Psoas muscle (tissue), 8 donors: ENCODE measurements at regions of chr10 and their contacts with region 1.

Region 1: GRCh38 chr10:15097011-15097812 is at the start of gene RPP38:
- DNase-seq: peak; percentile 97 to 99
- ATAC-seq: peak; percentile 98 to 99 (median 99)
- H3K4me3 ChIP-seq: peak within 1 kb of the TSS; percentile 86
- H3K27ac ChIP-seq: peak within 1 kb of the TSS; percentile 93
- H3K4me1 ChIP-seq: peaks cover 8% of the 10 kb centered on the region
- H3K27me3 ChIP-seq: no peaks in the 10 kb centered on the region
- CTCF ChIP-seq: no peak
- total RNA-seq, gene RPP38: 7.3 to 17.2 (median 11.1) TPM

Region 2: GRCh38 chr10:14959276-14960057 is 137.7 kb before region 1 on chr10 and contains the start of gene MEIG1:
- intact Hi-C with region 1: loop called (anchors 5 kb)
- DNase-seq: peak; percentile 92 to 96
- ATAC-seq: peak; percentile 96 to 97 (median 96)
- H3K4me3 ChIP-seq: peak within 1 kb of the TSS; percentile 96
- H3K27ac ChIP-seq: peak within 1 kb of the TSS; percentile 97
- H3K4me1 ChIP-seq: no peaks in the 10 kb centered on the region
- H3K27me3 ChIP-seq: no peaks in the 10 kb centered on the region
- CTCF ChIP-seq: no peak
- total RNA-seq, gene MEIG1: not detected

Region 3: GRCh38 chr10:15035385-15036301 is 61.6 kb before region 1 on chr10:
- intact Hi-C with region 1: no loop called
- DNase-seq: no peak
- ATAC-seq: no peak
- H3K4me3 ChIP-seq: no peak overlapping the region
- H3K27ac ChIP-seq: no peak overlapping the region
- H3K4me1 ChIP-seq: no peaks in the 10 kb centered on the region
- H3K27me3 ChIP-seq: no peaks in the 10 kb centered on the region
- CTCF ChIP-seq: no peak

Region 4: DNA sequence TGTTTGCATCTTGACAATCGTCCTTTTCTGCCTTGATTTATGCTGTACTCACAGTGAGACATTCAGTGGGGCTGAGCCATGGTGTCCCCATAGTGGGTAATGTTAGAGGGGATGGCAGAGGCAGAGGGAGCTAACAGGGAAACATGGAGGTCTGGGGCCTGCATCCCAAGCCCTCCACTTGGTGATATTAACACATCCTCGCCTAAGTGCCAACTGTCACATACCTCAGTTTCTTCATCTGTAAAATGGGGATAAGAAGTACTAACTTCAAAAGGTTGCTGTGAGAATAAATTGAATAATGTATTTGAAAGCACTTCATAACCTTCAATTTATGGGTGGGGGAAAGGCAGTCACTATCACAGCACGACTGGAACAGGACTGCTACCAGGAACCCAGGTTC is 27.7 kb after region 1 on chr10:
- intact Hi-C with region 1: loop called in 1 of 2 experiments (anchors 1 kb)
- DNase-seq: no peak
- ATAC-seq: no peak
- H3K4me3 ChIP-seq: no peak overlapping the region
- H3K27ac ChIP-seq: no peak overlapping the region
- H3K4me1 ChIP-seq: no peaks in the 10 kb centered on the region
- H3K27me3 ChIP-seq: no peaks in the 10 kb centered on the region
- CTCF ChIP-seq: no peak